PC-3 (cell line): ENCODE measurements at regions of chr7 and their contacts with region 1.

Region 1: GRCh38 chr7:48035301-48035966 is at the start of gene C7orf57:
- DNase-seq: peak; percentile 83
- ATAC-seq: peak; percentile 95
- H3K4me3 ChIP-seq: peak within 1 kb of the TSS; percentile 74
- H3K27ac ChIP-seq: no peak within 1 kb of the TSS
- H3K4me1 ChIP-seq: peaks cover 10% of the 10 kb centered on the region
- H3K27me3 ChIP-seq: no peaks in the 10 kb centered on the region
- CTCF ChIP-seq: no peak
- total RNA-seq, gene C7orf57: 0.15 TPM in 1 of 2 replicates, not detected in the other

Region 2: DNA sequence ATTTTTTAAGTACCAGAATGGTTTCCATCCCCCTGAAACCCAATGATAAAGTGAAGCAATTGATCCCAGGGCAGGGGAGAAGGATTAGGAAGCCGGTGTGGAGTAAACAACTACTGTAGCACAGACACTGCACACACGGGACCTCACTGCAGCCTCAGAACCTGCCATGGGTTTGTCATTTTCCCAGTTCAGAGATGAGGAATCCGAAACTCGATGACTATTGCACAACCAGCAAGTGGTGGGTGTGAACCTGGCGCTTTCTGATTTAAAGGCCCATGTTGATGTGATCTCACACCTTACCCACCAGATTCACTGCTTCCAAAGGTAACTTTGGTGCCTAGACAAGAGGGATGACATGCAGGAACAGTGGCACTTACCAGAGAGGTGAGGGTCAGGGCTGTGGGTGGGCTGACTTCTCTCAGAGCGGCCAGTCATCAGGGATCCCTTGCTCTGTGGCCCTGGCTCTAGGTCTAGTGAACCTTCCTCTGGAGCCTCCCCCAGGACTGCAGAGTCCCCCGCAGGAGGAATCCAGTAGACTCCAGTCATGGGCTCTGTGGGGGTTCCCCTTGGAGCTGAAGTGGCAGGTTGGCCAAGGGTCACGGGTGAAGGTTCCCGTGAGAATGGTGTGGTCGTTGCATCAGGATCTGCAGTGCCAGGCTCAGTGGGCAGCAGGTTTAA is 150.0 kb before region 1 on chr7:
- CTCF ChIA-PET with region 1: no interaction called
- POLR2A ChIA-PET with region 1: no interaction called
- intact Hi-C with region 1: no loop called
- DNase-seq: no peak
- ATAC-seq: no peak
- H3K4me3 ChIP-seq: no peak overlapping the region
- H3K27ac ChIP-seq: no peak overlapping the region
- H3K4me1 ChIP-seq: no peaks in the 10 kb centered on the region
- H3K27me3 ChIP-seq: no peaks in the 10 kb centered on the region
- CTCF ChIP-seq: no peak

Region 3: GRCh38 chr7:47954231-47954911 is 81.1 kb before region 1 on chr7:
- CTCF ChIA-PET with region 1: no interaction called
- POLR2A ChIA-PET with region 1: no interaction called
- intact Hi-C with region 1: no loop called
- DNase-seq: no peak
- ATAC-seq: no peak
- H3K4me3 ChIP-seq: no peak overlapping the region
- H3K27ac ChIP-seq: no peak overlapping the region
- H3K4me1 ChIP-seq: peaks cover 25% of the 10 kb centered on the region
- H3K27me3 ChIP-seq: no peaks in the 10 kb centered on the region
- CTCF ChIP-seq: no peak

Region 4: DNA sequence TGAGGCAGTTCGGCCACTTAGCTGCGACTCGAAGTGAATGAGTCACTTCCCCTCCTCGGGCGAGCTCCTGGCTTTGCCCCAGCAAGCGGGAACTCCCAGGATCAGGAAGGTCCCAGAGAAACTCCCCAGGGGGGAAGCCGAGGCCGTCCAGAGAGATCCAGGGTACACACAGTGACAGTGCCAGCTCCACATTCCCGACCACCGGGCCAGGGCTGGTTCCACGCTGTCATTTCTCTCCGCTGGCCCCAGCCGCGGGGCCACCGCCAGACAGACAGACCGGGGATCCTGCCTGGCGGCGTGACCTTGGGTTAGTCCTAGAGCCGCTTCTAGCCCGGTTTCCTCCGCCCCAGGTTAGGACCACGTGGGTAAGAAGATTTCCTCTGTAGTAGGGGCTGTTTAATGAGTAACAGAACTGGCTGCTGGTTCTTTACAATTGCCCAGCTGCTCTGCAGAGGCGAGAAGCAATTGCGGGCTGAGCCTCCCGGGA is 53.2 kb after region 1 on chr7:
- CTCF ChIA-PET with region 1: no interaction called
- POLR2A ChIA-PET with region 1: no interaction called
- intact Hi-C with region 1: loop called (anchors 1 kb)
- DNase-seq: peak; percentile 83
- ATAC-seq: peak; percentile 33
- H3K4me3 ChIP-seq: peak overlapping the region; percentile 94
- H3K27ac ChIP-seq: peak overlapping the region; percentile 99
- H3K4me1 ChIP-seq: peaks cover 56% of the 10 kb centered on the region
- H3K27me3 ChIP-seq: no peaks in the 10 kb centered on the region
- CTCF ChIP-seq: no peak

Region 5: GRCh38 chr7:48188776-48189520 is 153.5 kb after region 1 on chr7:
- CTCF ChIA-PET with region 1: no interaction called
- POLR2A ChIA-PET with region 1: no interaction called
- intact Hi-C with region 1: no loop called
- DNase-seq: no peak
- ATAC-seq: no peak
- H3K4me3 ChIP-seq: no peak overlapping the region
- H3K27ac ChIP-seq: no peak overlapping the region
- H3K4me1 ChIP-seq: peaks cover 2% of the 10 kb centered on the region
- H3K27me3 ChIP-seq: no peaks in the 10 kb centered on the region
- CTCF ChIP-seq: no peak